ENCODE measurements at regions of chr13 and their contacts with region 1.

Region 1: DNA sequence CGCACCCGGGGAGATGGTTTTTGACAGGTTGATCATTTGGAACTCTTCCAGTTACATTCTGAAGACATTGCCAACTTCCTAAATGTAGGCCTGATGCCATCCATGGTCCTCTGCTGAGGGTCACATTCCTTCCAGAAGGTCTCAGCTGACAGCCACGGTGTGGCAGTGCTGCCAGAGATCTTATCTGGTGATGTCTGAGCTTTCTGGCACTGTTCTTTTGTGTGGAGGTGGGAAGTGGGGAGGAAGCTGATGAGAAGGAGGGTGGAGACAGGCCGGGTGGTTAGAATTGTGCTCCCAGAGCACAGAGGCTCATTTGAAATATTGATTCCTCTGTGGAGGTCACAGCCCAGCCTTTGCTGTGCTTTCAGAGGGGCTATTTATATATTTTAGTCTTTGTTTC is 16.1 kb upstream of the MTIF3 start:
- DNase-seq: no peak
- CTCF ChIP-seq: no peak

Region 2: DNA sequence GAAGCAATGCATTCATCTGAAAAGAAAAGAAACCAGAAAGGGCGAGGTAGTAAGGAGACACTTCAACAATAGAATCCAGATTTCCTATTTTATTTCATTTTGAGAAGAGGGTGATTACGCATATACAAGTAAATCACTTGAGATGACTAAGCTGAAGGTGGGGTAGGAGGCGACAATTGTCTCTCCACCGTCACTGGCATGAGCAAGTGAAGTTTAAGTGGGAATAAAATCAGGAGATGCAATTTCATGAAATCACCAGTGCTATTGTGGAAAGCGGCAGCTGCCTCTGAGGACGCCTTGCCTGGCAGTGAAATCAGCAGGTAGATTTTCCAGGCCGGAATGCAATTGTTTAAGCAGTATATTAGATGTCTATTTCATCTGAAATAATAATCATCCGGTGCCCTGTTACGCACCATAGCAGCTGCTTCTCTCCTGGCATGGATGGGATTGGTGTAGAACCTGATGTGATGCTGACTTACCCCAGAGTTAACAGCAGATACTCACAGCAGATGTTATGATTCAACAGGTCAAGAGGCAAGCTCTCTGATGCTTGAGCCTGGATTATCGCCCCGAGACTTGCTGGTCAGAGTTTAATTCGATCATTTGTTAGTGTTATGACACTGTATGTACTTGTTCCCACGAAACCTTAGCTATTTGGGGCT is 131.6 kb before region 1 on chr13:
- CTCF ChIA-PET with region 1: no interaction called
- POLR2A ChIA-PET with region 1: no interaction called
- DNase-seq: no peak
- CTCF ChIP-seq: no peak

Region 3: DNA sequence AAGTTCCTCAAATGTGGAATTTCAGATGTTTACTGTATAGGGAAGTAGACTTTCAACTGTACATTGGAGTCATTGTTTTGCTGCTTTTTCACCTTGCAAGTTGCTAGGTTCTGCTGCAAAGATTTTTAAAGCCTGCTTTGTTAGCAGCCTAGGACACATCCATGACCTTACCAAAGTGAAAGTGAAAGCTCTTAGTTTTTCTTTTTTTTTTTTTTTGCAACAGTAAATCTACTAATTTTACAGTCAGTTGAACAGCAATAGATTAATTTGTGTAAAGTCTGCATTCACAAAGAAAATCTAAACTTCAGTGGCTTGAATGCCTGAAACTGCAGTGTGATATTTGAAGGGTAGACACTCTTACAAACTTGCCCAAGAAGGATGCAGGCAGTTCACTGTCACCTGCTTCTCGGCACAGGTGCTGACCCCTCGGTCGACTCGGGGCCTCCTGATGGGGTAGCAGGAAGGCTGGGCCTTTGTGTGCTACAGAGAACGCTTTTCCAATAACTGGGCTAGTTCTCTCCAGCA is 11.1 kb before region 1 on chr13:
- CTCF ChIA-PET with region 1: interaction called, 11 read pairs
- POLR2A ChIA-PET with region 1: no interaction called
- DNase-seq: peak; percentile 38
- CTCF ChIP-seq: no peak